ENCODE measurements at regions of chr21 and their contacts with region 1.

Region 1: GRCh38 chr21:36087362-36088138 is 17.7 kb downstream of the CBR1 start:
- DNase-seq: no peak
- H3K4me3 ChIP-seq: no peak overlapping the region
- H3K27ac ChIP-seq: no peak overlapping the region
- H3K4me1 ChIP-seq: no peaks in the 10 kb centered on the region
- H3K27me3 ChIP-seq: no peaks in the 10 kb centered on the region
- CTCF ChIP-seq: no peak

Region 2: GRCh38 chr21:36052860-36053714 is 34.5 kb before region 1 on chr21:
- CTCF ChIA-PET with region 1: no interaction called
- POLR2A ChIA-PET with region 1: interaction called, 12 read pairs
- intact Hi-C with region 1: no loop called
- DNase-seq: no peak
- H3K4me3 ChIP-seq: no peak overlapping the region
- H3K27ac ChIP-seq: no peak overlapping the region
- H3K4me1 ChIP-seq: no peaks in the 10 kb centered on the region
- H3K27me3 ChIP-seq: no peaks in the 10 kb centered on the region
- CTCF ChIP-seq: no peak

Measured in PC-9 (cell line).